Activated CD8-positive, alpha-beta memory T cell treated with anti-CD3 and anti-CD28 coated beads, Interleukin-2, amount 10 ng/mL, durations not matched to agents 7 days and 5 days (primary cell): ENCODE measurements at regions of chr2 and their contacts with region 1.

Region 1: DNA sequence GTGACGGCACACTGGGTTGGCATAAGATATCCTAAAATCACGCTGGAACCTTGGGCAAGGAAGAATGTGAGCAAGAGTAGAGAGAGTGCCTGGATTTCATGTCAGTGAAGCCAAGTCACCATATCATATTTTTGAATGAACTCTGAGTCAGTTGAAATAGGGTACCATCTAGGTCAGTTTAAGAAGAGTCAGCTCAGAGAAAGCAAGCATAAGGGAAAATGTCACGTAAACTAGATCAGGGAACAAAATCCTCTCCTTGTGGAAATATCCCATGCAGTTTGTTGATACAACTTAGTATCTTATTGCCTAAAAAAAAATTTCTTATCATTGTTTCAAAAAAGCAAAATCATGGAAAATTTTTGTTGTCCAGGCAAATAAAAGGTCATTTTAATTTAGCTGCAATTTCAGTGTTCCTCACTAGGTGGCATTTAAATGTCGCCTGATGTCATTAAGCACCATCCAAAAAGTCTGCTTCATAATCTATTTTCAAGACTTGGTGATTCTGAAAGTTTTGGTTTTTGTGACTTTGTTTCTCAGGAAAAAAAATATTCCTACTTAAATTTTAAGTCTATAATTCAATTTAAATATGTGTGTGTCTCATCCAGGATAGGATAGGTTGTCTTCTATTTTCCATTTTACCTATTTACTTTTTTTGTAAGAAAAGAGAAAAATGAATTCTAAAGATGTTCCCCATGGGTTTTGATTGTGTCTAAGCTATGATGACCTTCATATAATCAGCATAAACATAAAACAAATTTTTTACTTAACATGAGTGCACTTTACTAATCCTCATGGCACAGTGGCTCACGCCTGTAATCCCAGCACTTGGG is 19.6 kb downstream of the RSAD2 start:
- DNase-seq: no peak
- ATAC-seq: peak; percentile 39
- H3K4me3 Mint-ChIP-seq: no peak overlapping the region
- H3K27ac Mint-ChIP-seq: peak overlapping the region; percentile 31
- H3K4me1 Mint-ChIP-seq: peaks cover 13% of the 10 kb centered on the region
- H3K27me3 Mint-ChIP-seq: no peaks in the 10 kb centered on the region

Region 2: GRCh38 chr2:6496376-6496775 is 400.8 kb before region 1 on chr2:
- CTCF ChIA-PET with region 1: no interaction called
- DNase-seq: no peak
- ATAC-seq: no peak
- H3K4me3 Mint-ChIP-seq: no peak overlapping the region
- H3K27ac Mint-ChIP-seq: no peak overlapping the region
- H3K4me1 Mint-ChIP-seq: no peaks in the 10 kb centered on the region
- H3K27me3 Mint-ChIP-seq: no peaks in the 10 kb centered on the region

Region 3: GRCh38 chr2:6692056-6692455 is 205.1 kb before region 1 on chr2:
- CTCF ChIA-PET with region 1: no interaction called
- DNase-seq: no peak
- ATAC-seq: no peak
- H3K4me3 Mint-ChIP-seq: no peak overlapping the region
- H3K27ac Mint-ChIP-seq: no peak overlapping the region
- H3K4me1 Mint-ChIP-seq: no peaks in the 10 kb centered on the region
- H3K27me3 Mint-ChIP-seq: no peaks in the 10 kb centered on the region

Region 4: GRCh38 chr2:6739547-6739946 is 157.6 kb before region 1 on chr2:
- CTCF ChIA-PET with region 1: no interaction called
- DNase-seq: no peak
- ATAC-seq: no peak
- H3K4me3 Mint-ChIP-seq: no peak overlapping the region
- H3K27ac Mint-ChIP-seq: no peak overlapping the region
- H3K4me1 Mint-ChIP-seq: no peaks in the 10 kb centered on the region
- H3K27me3 Mint-ChIP-seq: peaks cover 8% of the 10 kb centered on the region

Region 5: DNA sequence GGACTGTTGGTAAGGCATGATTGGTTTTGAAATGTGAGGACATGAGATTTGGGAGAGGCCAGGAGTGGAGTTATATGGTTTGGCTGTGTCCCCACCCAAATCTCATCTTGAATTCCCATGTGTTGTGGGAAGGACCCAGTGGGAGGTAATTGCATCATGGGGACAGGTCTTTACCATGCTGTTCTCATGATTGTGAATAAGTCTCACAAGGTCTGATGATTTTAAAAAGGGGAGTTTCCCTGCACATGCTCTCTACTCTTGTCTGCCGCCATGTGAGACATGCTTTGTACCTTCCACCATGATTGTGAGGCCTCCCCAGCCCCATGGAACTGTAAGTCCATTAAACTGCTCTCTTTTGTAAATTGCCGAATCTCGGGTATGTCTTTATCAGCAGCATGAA is 36.8 kb before region 1 on chr2:
- CTCF ChIA-PET with region 1: interaction called, 10 read pairs
- DNase-seq: no peak
- ATAC-seq: no peak
- H3K4me3 Mint-ChIP-seq: no peak overlapping the region
- H3K27ac Mint-ChIP-seq: peak overlapping the region; percentile 45
- H3K4me1 Mint-ChIP-seq: peaks cover 81% of the 10 kb centered on the region
- H3K27me3 Mint-ChIP-seq: no peaks in the 10 kb centered on the region

Region 6: GRCh38 chr2:6883448-6884122 is 13.6 kb before region 1 on chr2:
- CTCF ChIA-PET with region 1: interaction called, 22 read pairs
- DNase-seq: no peak
- ATAC-seq: no peak
- H3K4me3 Mint-ChIP-seq: no peak overlapping the region
- H3K27ac Mint-ChIP-seq: no peak overlapping the region
- H3K4me1 Mint-ChIP-seq: peaks cover 51% of the 10 kb centered on the region
- H3K27me3 Mint-ChIP-seq: no peaks in the 10 kb centered on the region

Region 7: GRCh38 chr2:6909431-6910385 is 12.6 kb after region 1 on chr2:
- CTCF ChIA-PET with region 1: interaction called, 43 read pairs
- DNase-seq: peak; percentile 83
- ATAC-seq: peak; percentile 84
- H3K4me3 Mint-ChIP-seq: peak overlapping the region; percentile 50
- H3K27ac Mint-ChIP-seq: peak overlapping the region; percentile 86
- H3K4me1 Mint-ChIP-seq: peaks cover 86% of the 10 kb centered on the region
- H3K27me3 Mint-ChIP-seq: peaks cover 11% of the 10 kb centered on the region

Region 8: DNA sequence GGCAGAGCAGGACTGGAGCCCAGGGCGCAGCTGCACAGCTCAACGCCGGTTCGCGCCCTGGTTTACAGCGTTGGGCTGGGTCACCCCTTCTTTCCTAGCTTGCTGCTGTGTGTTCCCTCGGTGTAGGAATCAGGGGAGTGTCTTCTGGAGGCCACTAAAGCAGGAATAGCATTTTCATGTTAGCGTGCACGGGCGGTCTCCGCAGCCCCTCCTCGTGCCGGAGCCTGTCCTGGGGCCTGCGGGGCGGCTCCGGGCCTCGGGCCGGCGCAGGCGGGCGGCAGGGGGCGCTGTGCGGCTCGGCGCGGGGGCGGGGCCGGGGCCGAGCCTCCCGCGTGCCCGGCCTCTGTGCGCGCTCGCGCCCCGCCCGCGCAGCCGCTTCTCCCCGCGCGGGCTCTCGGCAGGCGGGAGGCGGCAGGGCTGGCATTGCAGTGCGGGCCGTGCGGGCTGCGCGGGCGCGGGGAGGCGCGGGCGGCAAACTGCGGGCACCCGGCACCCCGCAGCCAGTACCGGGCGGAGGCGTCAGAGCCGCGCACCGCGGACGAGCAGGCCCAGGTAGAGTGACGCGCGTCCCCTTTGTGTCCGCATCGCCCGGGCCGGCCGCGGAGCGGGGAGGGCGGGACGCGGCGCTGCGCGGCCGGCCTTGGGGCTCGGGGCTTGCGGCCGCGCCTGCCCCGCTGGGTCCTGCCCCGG is 20.1 kb after region 1 on chr2 and contains the start of gene RNF144A:
- CTCF ChIA-PET with region 1: interaction called, 43 read pairs
- DNase-seq: peak; percentile 68
- ATAC-seq: peak; percentile 88
- H3K4me3 Mint-ChIP-seq: peak within 1 kb of the TSS; percentile 66
- H3K27ac Mint-ChIP-seq: peak within 1 kb of the TSS; percentile 64
- H3K4me1 Mint-ChIP-seq: peaks cover 46% of the 10 kb centered on the region
- H3K27me3 Mint-ChIP-seq: peaks cover 11% of the 10 kb centered on the region
- total RNA-seq, gene RNF144A: 20.0 to 35.5 TPM

Region 9: DNA sequence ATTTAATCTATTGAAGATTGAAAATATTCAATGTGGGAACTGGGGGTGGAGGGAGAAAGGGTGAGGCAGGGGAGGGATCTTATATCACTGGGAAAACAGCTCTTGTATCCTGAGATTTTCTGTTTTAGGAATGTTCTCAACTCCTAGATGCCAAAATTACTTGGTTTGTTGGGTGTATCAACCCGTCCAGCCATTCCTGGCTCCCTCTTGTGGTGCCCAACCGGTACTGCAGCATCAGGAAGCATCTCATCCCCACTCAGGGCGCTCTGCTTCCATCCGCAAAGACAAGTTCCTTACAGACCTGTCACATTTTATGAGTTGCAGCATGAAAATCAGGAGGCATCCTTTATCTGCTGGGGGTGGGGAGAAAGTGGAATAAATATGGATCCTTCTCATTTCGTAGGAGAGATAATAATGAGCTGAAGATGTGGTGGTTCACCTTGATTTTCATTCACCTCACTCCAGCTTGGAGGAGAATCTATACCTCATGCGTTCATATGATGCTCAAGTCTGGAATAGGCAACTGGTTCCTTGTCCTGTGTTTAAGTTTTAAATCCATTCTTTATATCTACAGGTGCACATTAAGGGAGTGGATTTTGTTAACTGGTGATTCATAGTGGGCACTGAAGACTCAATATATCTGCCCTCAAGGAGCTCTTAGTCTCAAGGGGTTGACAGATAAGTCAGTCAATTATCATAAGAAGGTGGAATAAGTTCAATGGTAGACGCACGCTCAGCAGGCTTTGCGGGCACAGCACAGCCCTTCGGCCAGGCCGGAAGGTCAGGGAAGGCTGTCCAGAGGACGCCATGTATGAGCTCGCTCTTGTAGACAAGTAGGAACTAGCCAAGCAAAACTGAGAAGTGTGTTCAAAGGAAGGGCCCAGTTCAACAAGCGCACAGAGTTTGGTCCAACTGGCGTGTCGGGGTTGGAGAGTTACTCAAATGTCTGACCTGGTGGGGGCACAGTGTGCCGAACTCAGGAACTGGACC is 147.4 kb after region 1 on chr2:
- CTCF ChIA-PET with region 1: interaction called, 49 read pairs
- DNase-seq: peak; percentile 73
- ATAC-seq: peak; percentile 75
- H3K4me3 Mint-ChIP-seq: no peak overlapping the region
- H3K27ac Mint-ChIP-seq: no peak overlapping the region
- H3K4me1 Mint-ChIP-seq: peaks cover 8% of the 10 kb centered on the region
- H3K27me3 Mint-ChIP-seq: no peaks in the 10 kb centered on the region